ENCODE measurements at regions of chr1 and their contacts with region 1.

Region 1: DNA sequence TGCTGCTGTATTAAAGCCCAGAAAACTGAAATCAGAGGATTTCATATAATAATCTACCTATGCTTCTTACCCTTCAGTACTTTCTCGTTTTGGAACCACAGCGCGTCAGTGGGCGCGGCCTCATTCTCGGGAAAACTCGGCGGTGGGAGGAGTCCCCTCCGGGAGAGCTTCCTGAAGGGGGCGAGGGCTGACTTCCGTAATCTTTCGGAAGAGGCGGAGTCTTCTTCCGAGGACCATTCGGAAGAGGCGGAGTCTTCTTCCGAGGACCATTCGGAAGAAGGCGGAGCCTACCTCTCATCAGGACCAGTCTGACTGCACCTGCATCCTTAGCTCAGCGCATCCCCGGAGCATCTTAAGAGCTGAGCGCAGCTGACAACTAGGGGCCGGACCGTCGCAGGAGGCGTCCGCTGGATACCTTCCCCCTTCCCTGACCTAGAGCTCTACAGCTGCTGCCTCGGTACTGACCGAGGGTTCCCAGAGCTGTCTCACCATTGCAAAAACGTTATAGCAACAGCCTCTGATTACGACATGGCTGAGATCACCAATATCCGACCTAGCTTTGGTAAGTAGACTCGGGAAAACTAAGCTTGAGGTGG is at the start of gene SYT11:
- DNase-seq: peak; percentile 78 to 93 (median 90)
- ATAC-seq: peak; percentile 90
- H3K4me3 ChIP-seq: peak within 1 kb of the TSS; percentile 62
- H3K4me3 Mint-ChIP-seq: peak within 1 kb of the TSS; percentile 75 to 95 (median 92)
- H3K27ac ChIP-seq: peak within 1 kb of the TSS; percentile 72
- H3K27ac Mint-ChIP-seq: peak within 1 kb of the TSS; percentile 64 to 97 (median 86)
- H3K4me1 ChIP-seq: peaks cover 17 to 25% of the 10 kb centered on the region in 2 donors
- H3K4me1 Mint-ChIP-seq: peaks cover 0 to 51% (median 39%) of the 10 kb centered on the region in 7 donors
- H3K27me3 ChIP-seq: no peaks in the 10 kb centered on the region
- H3K27me3 Mint-ChIP-seq: peaks cover 0 to 24% (median 11%) of the 10 kb centered on the region in 5 donors
- total RNA-seq, gene SYT11: 1.4 to 22.9 (median 2.7) TPM

Region 2: GRCh38 chr1:154607609-154608396 is 1251.5 kb before region 1 on chr1 and contains the start of gene ADAR:
- CTCF ChIA-PET with region 1: no interaction called
- POLR2A ChIA-PET with region 1: no interaction called
- intact Hi-C with region 1: loop called in 1 of 2 experiments (anchors 5 kb)
- DNase-seq: peak; percentile 67 to 95 (median 90)
- ATAC-seq: peak; percentile 92
- H3K4me3 ChIP-seq: peak within 1 kb of the TSS; percentile 78
- H3K4me3 Mint-ChIP-seq: peak within 1 kb of the TSS; percentile 91 to 100 (median 98)
- H3K27ac ChIP-seq: peak within 1 kb of the TSS; percentile 97
- H3K27ac Mint-ChIP-seq: peak within 1 kb of the TSS; percentile 94 to 99 (median 99)
- H3K4me1 ChIP-seq: peaks cover 40 to 42% of the 10 kb centered on the region in 2 donors
- H3K4me1 Mint-ChIP-seq: peaks cover 63 to 90% (median 75%) of the 10 kb centered on the region in 7 donors
- H3K27me3 ChIP-seq: no peaks in the 10 kb centered on the region
- H3K27me3 Mint-ChIP-seq: no peaks in the 10 kb centered on the region
- total RNA-seq, gene ADAR: 206 to 408 (median 237) TPM

Region 3: GRCh38 chr1:155562581-155563376 is 296.6 kb before region 1 on chr1 and contains the start of gene ASH1L:
- CTCF ChIA-PET with region 1: no interaction called
- POLR2A ChIA-PET with region 1: no interaction called
- intact Hi-C with region 1: loop called in 1 of 2 experiments (anchors 5 kb)
- DNase-seq: peak; percentile 85 to 94 (median 90)
- ATAC-seq: peak; percentile 90
- H3K4me3 ChIP-seq: peak within 1 kb of the TSS; percentile 100
- H3K4me3 Mint-ChIP-seq: peak within 1 kb of the TSS; percentile 91 to 100 (median 98)
- H3K27ac ChIP-seq: peak within 1 kb of the TSS; percentile 86
- H3K27ac Mint-ChIP-seq: peak within 1 kb of the TSS; percentile 95 to 100 (median 98)
- H3K4me1 ChIP-seq: peaks cover 26 to 32% of the 10 kb centered on the region in 2 donors
- H3K4me1 Mint-ChIP-seq: peaks cover 15 to 56% (median 47%) of the 10 kb centered on the region in 7 donors
- H3K27me3 ChIP-seq: no peaks in the 10 kb centered on the region
- H3K27me3 Mint-ChIP-seq: peaks cover 0 to 4% (median 0%) of the 10 kb centered on the region in 5 donors
- total RNA-seq, gene ASH1L: 57.2 to 109 (median 95.1) TPM

Region 4: DNA sequence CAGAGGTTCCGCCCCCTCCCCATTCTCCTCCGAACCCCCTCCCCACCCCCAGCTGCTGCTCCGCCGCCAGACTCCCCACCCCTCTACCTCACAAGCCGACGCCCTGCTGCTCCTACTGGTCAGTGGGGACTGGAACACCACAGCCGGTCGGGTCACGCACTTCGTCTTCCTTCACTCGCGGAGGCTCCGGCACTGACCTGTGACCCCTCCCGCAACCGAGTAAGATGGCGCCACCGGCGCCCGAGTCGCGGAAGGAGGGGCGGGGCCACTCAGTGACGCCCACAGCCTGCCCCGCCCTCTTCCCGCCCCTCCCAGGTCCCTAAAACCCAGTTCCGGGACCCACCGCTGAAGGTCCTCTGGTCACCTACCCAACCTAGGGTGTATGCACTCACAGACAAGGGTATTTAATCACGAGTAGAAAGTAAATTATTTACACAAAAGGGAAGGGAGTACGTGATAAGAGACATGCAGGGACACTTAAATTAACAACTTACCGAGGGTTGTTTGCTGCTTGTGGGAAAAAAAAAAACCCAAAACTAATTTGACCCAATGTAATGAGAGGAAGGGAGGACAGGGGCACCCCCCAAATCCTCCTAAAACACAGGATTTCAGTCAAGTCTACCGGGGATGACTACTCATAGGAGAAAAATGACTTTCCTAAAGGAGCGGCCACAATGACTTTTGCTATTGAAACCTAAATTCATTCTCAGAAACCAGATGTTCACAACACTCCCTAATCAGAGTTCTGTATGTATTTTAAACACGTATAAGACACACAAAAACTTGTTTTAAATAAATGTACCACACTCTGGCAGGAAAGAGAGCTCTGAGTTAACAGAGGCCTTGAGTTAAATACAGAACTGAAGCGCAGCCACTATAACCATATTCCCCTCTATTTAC is 52.1 kb after region 1 on chr1 and contains the start of gene RIT1:
- CTCF ChIA-PET with region 1: no interaction called
- POLR2A ChIA-PET with region 1: no interaction called
- intact Hi-C with region 1: loop called (anchors 1 kb)
- DNase-seq: peak; percentile 68 to 85 (median 76)
- ATAC-seq: peak; percentile 99
- H3K4me3 ChIP-seq: peak within 1 kb of the TSS; percentile 73
- H3K4me3 Mint-ChIP-seq: peak within 1 kb of the TSS; percentile 85 to 99 (median 96)
- H3K27ac ChIP-seq: peak within 1 kb of the TSS; percentile 80
- H3K27ac Mint-ChIP-seq: peak within 1 kb of the TSS; percentile 90 to 99 (median 96)
- H3K4me1 ChIP-seq: peaks cover 5 to 17% of the 10 kb centered on the region in 2 donors
- H3K4me1 Mint-ChIP-seq: peaks cover 11 to 38% (median 21%) of the 10 kb centered on the region in 7 donors
- H3K27me3 ChIP-seq: no peaks in the 10 kb centered on the region
- H3K27me3 Mint-ChIP-seq: no peaks in the 10 kb centered on the region
- total RNA-seq, gene RIT1: 34.0 to 83.9 (median 41.4) TPM

Region 5: GRCh38 chr1:156193488-156194299 is 334.4 kb after region 1 on chr1 and contains the start of gene SLC25A44:
- CTCF ChIA-PET with region 1: no interaction called
- POLR2A ChIA-PET with region 1: no interaction called
- intact Hi-C with region 1: loop called in 1 of 2 experiments (anchors 1 kb)
- DNase-seq: peak; percentile 94 to 98 (median 97)
- ATAC-seq: peak; percentile 99
- H3K4me3 ChIP-seq: peak within 1 kb of the TSS; percentile 92
- H3K4me3 Mint-ChIP-seq: peak within 1 kb of the TSS; percentile 83 to 99 (median 97)
- H3K27ac ChIP-seq: peak within 1 kb of the TSS; percentile 86
- H3K27ac Mint-ChIP-seq: peak within 1 kb of the TSS; percentile 85 to 97 (median 93)
- H3K4me1 ChIP-seq: peaks cover 12 to 31% of the 10 kb centered on the region in 2 donors
- H3K4me1 Mint-ChIP-seq: peaks cover 22 to 53% (median 45%) of the 10 kb centered on the region in 7 donors
- H3K27me3 ChIP-seq: no peaks in the 10 kb centered on the region
- H3K27me3 Mint-ChIP-seq: no peaks in the 10 kb centered on the region
- total RNA-seq, gene SLC25A44: 17.8 to 38.4 (median 19.6) TPM

Region 6: DNA sequence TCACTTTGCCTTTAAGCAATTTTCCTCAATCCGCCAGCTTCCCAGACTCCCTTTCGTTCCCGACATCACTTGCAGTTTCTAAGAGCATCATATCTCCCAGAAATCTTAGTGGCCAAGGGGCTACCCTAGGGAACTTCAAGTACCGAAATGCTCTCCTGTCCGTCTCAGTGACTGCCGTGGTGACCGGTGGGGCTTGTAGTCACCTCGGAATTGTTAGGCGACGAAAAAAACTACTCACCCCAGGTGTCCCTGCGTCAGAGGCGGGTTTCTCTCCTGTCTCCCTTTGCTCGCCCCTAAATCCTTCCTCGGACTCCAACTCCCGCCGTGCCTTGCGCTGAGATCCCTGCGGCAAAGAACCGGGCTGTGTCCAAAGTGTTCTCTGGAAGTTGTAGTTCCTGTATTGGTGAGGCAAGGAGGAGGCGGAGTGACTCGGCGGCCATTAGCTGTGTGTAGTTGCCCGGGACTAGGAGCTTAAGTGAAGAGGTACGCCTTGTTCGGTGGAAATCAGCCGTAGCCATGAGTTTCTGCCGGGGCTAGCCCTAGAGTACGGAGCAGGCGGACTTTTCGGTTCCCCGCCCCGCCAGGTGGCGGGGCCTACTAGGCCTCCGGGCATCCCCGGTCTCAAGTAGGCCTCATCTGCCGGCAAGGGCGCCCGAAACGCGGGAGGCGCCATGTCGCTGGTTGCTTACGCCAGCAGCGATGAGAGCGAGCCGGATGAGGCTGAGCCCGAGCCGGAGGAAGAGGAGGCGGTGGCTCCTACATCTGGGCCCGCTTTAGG is 908.0 kb after region 1 on chr1 and contains the start of gene PRCC:
- CTCF ChIA-PET with region 1: no interaction called
- POLR2A ChIA-PET with region 1: no interaction called
- intact Hi-C with region 1: loop called in 1 of 2 experiments (anchors 2 kb)
- DNase-seq: peak; percentile 83 to 100 (median 98)
- ATAC-seq: peak; percentile 94
- H3K4me3 ChIP-seq: peak within 1 kb of the TSS; percentile 89
- H3K4me3 Mint-ChIP-seq: no peak within 1 kb of the TSS
- H3K27ac ChIP-seq: peak within 1 kb of the TSS; percentile 98
- H3K27ac Mint-ChIP-seq: peak within 1 kb of the TSS in 3 of 9 donors; percentile 13 to 91 (median 88)
- H3K4me1 ChIP-seq: peaks cover 23 to 36% of the 10 kb centered on the region in 2 donors
- H3K4me1 Mint-ChIP-seq: peaks cover 35 to 46% (median 37%) of the 10 kb centered on the region in 7 donors
- H3K27me3 ChIP-seq: no peaks in the 10 kb centered on the region
- H3K27me3 Mint-ChIP-seq: no peaks in the 10 kb centered on the region
- total RNA-seq, gene PRCC: 53.2 to 88.9 (median 61.7) TPM